Aorta (tissue), 5 donors: ENCODE measurements at regions of chr9 and their contacts with region 1.

Region 1: DNA sequence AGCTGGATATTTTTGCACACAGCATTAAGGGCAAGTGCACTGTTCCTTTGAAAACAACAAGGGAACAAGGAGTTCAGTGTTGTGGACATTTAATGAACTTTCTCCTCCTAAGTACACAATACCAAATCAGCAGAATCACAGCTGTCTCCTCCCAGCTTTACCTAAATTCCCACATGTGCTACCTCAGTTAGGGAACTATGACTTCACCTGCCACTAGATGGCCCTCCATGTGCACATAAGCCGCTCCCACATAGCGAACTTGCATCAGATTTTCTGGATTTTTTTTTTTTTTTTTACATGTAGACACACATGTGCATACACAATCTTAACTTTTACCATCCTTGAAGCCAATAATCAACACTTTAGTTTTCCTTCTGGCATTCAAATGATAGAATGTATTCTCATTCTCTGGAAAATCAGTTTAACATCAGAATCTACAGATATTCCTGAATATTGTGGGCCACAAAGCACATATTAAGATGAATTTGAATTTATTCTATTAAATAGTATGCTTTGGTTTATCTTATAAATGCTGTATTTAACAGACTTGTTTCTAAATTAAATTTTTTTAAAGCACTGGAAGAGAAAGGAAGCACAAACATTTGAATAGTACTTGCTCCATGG is 123.6 kb downstream of the PALM2AKAP2 start:
- DNase-seq: no peak
- ATAC-seq: peak; percentile 64
- H3K4me3 ChIP-seq: no peak overlapping the region
- H3K27ac ChIP-seq: no peak overlapping the region
- H3K4me1 ChIP-seq: peaks cover 0 to 2% of the 10 kb centered on the region in 2 donors
- H3K27me3 ChIP-seq: no peaks in the 10 kb centered on the region

Region 2: GRCh38 chr9:110048403-110048975 is 144.9 kb after region 1 on chr9:
- intact Hi-C with region 1: loop called in 1 of 2 experiments (anchors 10 kb)
- DNase-seq: peak; percentile 85 to 94
- ATAC-seq: peak; percentile 92
- H3K4me3 ChIP-seq: peak overlapping the region; percentile 72 to 97
- H3K27ac ChIP-seq: peak overlapping the region in 1 of 2 donors; percentile 2
- H3K4me1 ChIP-seq: no peaks in the 10 kb centered on the region
- H3K27me3 ChIP-seq: no peaks in the 10 kb centered on the region

Region 3: GRCh38 chr9:110058304-110058953 is 154.8 kb after region 1 on chr9:
- intact Hi-C with region 1: loop called in 1 of 2 experiments (anchors 5 kb)
- DNase-seq: peak in 1 of 2 donors; percentile 58
- ATAC-seq: peak; percentile 58
- H3K4me3 ChIP-seq: no peak overlapping the region
- H3K27ac ChIP-seq: no peak overlapping the region
- H3K4me1 ChIP-seq: no peaks in the 10 kb centered on the region
- H3K27me3 ChIP-seq: no peaks in the 10 kb centered on the region

Region 4: GRCh38 chr9:110152704-110153374 is 249.2 kb after region 1 on chr9:
- intact Hi-C with region 1: loop called (anchors 2 to 5 kb)
- DNase-seq: no peak
- ATAC-seq: peak; percentile 31
- H3K4me3 ChIP-seq: no peak overlapping the region
- H3K27ac ChIP-seq: no peak overlapping the region
- H3K4me1 ChIP-seq: peaks cover 11 to 12% of the 10 kb centered on the region in 2 donors
- H3K27me3 ChIP-seq: no peaks in the 10 kb centered on the region

Region 5: DNA sequence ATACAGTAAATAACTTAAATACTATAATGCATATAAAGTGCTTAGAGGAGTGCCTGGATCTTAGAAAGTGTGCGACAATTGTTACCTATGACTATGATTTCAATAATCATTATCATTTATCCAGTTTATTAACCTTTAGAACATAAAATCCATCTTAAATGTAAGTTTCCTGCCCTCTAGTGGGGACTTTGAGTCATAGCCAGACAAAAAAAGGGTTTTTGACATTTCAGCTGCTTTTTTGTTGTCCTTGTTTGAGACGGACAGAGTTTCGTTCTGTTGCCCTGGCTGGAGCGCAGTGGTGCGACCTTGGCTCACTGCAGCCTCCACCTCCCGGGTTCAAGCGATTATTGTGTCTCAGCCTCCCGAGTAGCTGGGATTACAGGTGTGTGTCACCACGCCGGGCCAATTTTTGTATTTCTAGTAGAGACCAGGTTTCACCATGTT is 314.1 kb after region 1 on chr9:
- intact Hi-C with region 1: loop called in 1 of 2 experiments (anchors 5 kb)
- DNase-seq: no peak
- ATAC-seq: no peak
- H3K4me3 ChIP-seq: no peak overlapping the region
- H3K27ac ChIP-seq: no peak overlapping the region
- H3K4me1 ChIP-seq: no peaks in the 10 kb centered on the region
- H3K27me3 ChIP-seq: no peaks in the 10 kb centered on the region